PC-9 (cell line): ENCODE measurements at regions of chr2 and their contacts with region 1.

Region 1: DNA sequence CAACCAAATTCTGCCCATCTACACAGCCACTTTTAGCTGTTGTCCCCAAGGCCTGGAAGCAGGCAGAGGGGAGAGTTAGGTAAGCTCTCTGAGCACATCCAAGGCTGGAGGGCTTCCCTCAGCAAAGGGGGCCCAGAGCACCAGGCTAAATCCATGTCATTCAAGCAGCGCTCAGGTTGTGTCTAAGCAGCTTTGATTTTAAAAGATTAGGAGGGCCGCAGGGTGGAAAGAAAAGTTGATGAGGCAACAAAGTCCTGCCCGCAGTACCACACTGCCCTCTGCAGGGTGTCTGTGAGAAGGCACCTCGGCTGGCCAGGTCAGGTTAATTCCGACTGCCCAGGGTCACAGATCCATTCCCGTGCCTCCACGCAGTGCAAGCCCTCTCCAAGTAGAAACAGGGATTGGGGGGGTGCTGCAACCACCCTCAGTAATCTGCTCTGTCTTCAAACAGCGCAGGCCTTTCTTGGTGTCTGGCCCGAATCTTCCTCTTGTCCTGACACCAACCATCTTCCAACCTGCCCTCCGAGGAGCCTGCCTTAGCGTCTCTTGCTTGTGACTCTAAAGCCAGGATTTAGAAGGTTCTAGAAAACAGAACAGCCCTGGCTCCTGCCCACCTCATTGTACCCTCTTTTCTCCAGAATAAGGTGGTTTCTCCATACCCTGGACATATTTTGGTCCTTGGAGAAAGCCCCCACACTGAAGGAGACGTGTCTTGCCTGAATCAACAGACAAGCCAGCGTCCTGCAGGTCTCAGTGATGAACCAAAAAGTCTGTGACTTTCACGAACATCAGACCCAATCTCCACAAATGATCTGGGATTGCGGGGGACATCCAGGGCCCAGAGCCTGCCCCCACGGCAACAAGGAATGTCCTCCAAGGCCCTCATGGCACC is 289.2 kb downstream of the TNS1 start:
- DNase-seq: peak; percentile 36 to 84
- H3K4me3 ChIP-seq: no peak overlapping the region
- H3K27ac ChIP-seq: no peak overlapping the region
- H3K4me1 ChIP-seq: peaks cover 26% of the 10 kb centered on the region
- H3K27me3 ChIP-seq: no peaks in the 10 kb centered on the region
- CTCF ChIP-seq: peak; percentile 95

Region 2: GRCh38 chr2:216666461-216667233 is 1047.0 kb before region 1 on chr2:
- CTCF ChIA-PET with region 1: no interaction called
- POLR2A ChIA-PET with region 1: no interaction called
- intact Hi-C with region 1: loop called (anchors 2 kb)
- DNase-seq: peak; percentile 56 to 72
- H3K4me3 ChIP-seq: no peak overlapping the region
- H3K27ac ChIP-seq: no peak overlapping the region
- H3K4me1 ChIP-seq: peaks cover 25% of the 10 kb centered on the region
- H3K27me3 ChIP-seq: no peaks in the 10 kb centered on the region
- CTCF ChIP-seq: peak; percentile 99

Region 3: DNA sequence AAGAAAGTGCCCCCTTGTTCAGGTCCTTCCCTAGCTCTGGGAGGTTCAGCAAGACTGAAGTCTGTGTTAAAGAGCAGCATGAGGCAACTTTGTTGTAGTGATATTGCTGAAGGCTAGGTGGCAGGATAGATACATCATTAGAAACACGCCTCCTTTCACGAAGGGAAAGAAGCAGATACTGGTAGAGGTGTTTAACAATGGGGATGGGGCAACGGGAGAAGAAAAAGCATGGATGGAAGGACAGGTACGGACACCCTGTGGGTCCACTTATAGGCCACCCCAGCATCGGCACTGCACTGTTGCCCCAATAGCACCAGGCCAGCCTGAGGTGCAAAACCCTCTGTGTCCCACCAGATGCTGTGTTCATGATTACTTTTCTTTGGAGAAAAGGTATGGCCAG is 1014.7 kb before region 1 on chr2:
- CTCF ChIA-PET with region 1: no interaction called
- POLR2A ChIA-PET with region 1: no interaction called
- intact Hi-C with region 1: loop called (anchors 2 kb)
- DNase-seq: no peak
- H3K4me3 ChIP-seq: no peak overlapping the region
- H3K27ac ChIP-seq: no peak overlapping the region
- H3K4me1 ChIP-seq: 0 out of 2 replicates have a peak, but pooled peaks cover 3% of the 10 kb centered on the region
- H3K27me3 ChIP-seq: no peaks in the 10 kb centered on the region
- CTCF ChIP-seq: peak; percentile 67

Region 4: DNA sequence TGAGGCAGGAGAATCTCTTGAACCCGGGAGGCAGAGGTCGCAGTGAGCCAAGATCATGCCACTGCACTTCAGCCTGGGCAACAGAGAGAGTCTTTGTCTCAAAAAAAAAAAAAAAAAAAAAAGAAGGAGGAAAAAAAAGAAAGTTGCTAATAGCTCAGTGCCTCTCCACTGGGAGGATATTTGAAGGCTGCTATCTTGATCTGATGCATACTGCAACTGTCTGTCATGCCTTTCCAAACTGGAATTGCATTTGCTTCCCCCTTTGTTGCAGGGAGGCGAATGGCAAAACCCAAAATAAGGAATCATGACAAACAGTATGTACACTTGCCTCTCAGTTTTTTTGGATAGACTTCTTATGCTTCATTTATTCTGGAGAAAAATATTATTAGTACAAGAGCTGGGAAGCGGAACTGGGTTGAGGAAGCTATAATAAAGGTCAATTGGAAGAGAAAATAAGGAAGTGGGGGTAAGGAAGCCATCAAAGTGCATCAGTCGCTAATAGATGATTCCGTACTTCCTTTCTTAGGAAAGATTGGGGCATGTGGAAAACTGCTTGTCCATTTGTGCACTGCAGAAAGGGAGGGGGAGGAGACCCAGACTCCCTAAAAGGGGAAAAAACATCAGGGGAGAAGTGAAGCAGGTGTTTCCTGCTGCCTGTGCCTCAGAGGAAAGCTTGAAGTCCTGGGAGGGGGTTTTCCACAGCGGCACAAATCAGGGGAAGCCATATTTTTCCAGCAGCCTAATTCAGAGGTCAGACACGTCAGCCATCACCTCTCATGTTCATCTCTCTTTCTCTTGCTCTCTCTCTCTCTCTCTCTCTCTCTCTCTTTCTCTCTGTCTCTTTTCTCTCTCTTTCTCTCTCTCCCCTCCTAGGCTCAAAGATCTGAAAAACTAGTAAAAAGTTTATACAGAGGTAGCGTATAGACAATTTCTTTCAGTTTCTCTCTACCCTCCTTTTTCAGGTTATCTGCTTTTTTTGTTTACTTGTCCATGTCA is 552.4 kb before region 1 on chr2:
- CTCF ChIA-PET with region 1: interaction called, 11 read pairs
- POLR2A ChIA-PET with region 1: no interaction called
- intact Hi-C with region 1: loop called (anchors 10 kb)
- DNase-seq: no peak
- H3K4me3 ChIP-seq: no peak overlapping the region
- H3K27ac ChIP-seq: no peak overlapping the region
- H3K4me1 ChIP-seq: peaks cover 21% of the 10 kb centered on the region; the same call in 1 of the 2 replicates
- H3K27me3 ChIP-seq: no peaks in the 10 kb centered on the region
- CTCF ChIP-seq: no peak

Region 5: GRCh38 chr2:217331523-217332139 is 382.0 kb before region 1 on chr2:
- CTCF ChIA-PET with region 1: no interaction called
- POLR2A ChIA-PET with region 1: no interaction called
- intact Hi-C with region 1: loop called (anchors 1 kb)
- DNase-seq: peak; percentile 88 to 99
- H3K4me3 ChIP-seq: no peak overlapping the region
- H3K27ac ChIP-seq: peak overlapping the region; percentile 79
- H3K4me1 ChIP-seq: peaks cover 90% of the 10 kb centered on the region
- H3K27me3 ChIP-seq: no peaks in the 10 kb centered on the region
- CTCF ChIP-seq: no peak

Region 6: DNA sequence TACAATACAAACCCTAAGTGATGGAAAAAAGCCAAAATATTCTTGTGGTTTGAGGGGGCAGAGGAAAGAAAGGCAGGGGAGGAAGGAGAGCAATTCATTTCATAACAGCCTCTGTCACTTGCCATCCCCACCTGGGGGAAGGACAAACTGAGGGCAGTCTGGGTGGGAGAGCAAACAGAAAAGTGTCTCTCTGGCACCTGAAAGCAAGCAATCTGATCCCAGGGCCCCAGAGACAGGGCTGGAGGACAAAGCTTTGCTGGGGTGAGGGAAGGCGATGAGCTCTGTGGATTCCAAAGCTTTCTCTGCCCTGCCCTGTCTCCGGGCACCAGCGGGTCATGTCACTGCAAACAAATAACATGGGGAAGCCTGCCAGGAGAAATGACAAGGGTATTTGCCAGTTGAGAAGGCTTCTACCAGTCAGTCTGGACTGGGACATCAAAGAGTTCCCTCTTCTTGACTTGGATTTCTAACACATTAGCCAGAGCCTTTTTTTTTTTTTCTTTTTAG is 325.7 kb before region 1 on chr2:
- CTCF ChIA-PET with region 1: no interaction called
- POLR2A ChIA-PET with region 1: no interaction called
- intact Hi-C with region 1: loop called (anchors 1 kb)
- DNase-seq: peak; percentile 90 to 92
- H3K4me3 ChIP-seq: no peak overlapping the region
- H3K27ac ChIP-seq: peak overlapping the region; percentile 43
- H3K4me1 ChIP-seq: peaks cover 30% of the 10 kb centered on the region
- H3K27me3 ChIP-seq: no peaks in the 10 kb centered on the region
- CTCF ChIP-seq: no peak